ENCODE measurements at regions of chr11 and their contacts with region 1.

Region 1: GRCh38 chr11:36672813-36673450 is 74.9 kb upstream of the RAG2 start:
- DNase-seq: peak; percentile 44
- H3K4me3 ChIP-seq: no peak overlapping the region
- H3K27ac ChIP-seq: no peak overlapping the region
- H3K4me1 ChIP-seq: no peaks in the 10 kb centered on the region
- H3K27me3 ChIP-seq: no peaks in the 10 kb centered on the region
- CTCF ChIP-seq: peak; percentile 47 to 86 (median 74)
- POLR2A ChIP-seq: no peak

Region 2: DNA sequence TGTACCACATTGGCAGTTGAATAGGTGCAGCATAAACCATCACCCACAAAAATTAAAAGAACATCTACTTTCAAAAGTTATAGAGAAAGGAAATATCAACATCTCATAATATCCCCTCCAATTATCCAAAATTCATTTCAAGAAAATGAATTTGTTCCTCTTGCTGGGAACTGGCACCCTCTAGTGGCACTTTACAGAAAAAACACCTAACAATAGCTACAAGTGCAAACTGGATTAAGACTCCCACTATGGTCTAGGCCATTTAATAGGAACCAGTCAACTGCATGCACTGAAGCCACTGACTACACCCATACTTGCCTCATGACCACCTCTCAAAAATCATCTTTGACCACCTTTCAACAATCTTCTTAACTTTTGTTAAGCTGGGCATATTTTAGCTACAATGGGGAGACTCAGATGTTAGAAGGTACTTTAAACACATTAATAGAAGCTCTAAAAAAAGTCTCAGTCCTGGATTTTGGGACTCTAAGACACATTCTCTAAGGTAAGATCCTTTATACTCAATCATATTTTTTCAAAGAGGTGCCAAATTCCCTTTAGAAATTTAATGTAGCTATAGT is 180.1 kb before region 1 on chr11:
- intact Hi-C with region 1: no loop called
- DNase-seq: no peak
- H3K4me3 ChIP-seq: no peak overlapping the region
- H3K27ac ChIP-seq: no peak overlapping the region
- H3K4me1 ChIP-seq: no peaks in the 10 kb centered on the region
- H3K27me3 ChIP-seq: no peaks in the 10 kb centered on the region
- CTCF ChIP-seq: peak; percentile 44 to 78 (median 58)
- POLR2A ChIP-seq: no peak

Region 3: GRCh38 chr11:36564376-36565030 is 108.4 kb before region 1 on chr11:
- intact Hi-C with region 1: loop called (anchors 10 kb)
- DNase-seq: peak; percentile 74
- H3K4me3 ChIP-seq: no peak overlapping the region
- H3K27ac ChIP-seq: no peak overlapping the region
- H3K4me1 ChIP-seq: peaks cover 3% of the 10 kb centered on the region
- H3K27me3 ChIP-seq: no peaks in the 10 kb centered on the region
- CTCF ChIP-seq: peak; percentile 37 to 64 (median 44)
- POLR2A ChIP-seq: no peak

Region 4: GRCh38 chr11:36874291-36874690 is 201.4 kb after region 1 on chr11:
- intact Hi-C with region 1: no loop called
- DNase-seq: no peak
- H3K4me3 ChIP-seq: no peak overlapping the region
- H3K27ac ChIP-seq: no peak overlapping the region
- H3K4me1 ChIP-seq: no peaks in the 10 kb centered on the region
- H3K27me3 ChIP-seq: no peaks in the 10 kb centered on the region
- CTCF ChIP-seq: no peak
- POLR2A ChIP-seq: no peak